PC-3 (cell line): ENCODE measurements at regions of chr6 and their contacts with region 1.

Region 1: GRCh38 chr6:3281631-3282475 is 23.1 kb downstream of the PSMG4 start:
- DNase-seq: peak; percentile 97
- ATAC-seq: peak; percentile 97
- H3K4me3 ChIP-seq: peak overlapping the region; percentile 26; the same call in 1 of the 2 replicates
- H3K27ac ChIP-seq: peak overlapping the region; percentile 89
- H3K4me1 ChIP-seq: peaks cover 25% of the 10 kb centered on the region
- H3K27me3 ChIP-seq: no peaks in the 10 kb centered on the region
- CTCF ChIP-seq: no peak

Region 2: DNA sequence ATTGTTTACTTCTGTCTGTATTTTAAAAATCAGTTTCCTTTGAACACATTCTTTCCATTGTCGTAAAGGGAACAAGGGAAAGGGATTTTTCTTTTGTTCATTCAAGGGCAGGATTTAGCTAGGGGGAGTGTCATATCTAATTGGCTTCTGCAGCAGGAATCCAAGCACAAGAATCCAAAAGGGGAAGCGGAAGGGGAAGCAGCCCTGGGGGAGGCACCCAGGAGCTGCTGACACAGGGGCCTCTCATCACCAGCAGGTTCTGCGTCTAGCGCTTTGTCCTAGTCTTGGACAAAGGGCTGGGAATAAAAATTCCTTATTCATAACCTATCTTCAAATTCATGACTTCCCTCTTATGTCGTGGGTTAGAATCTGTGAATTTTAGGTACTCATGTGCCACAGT is 199.9 kb before region 1 on chr6:
- CTCF ChIA-PET with region 1: no interaction called
- POLR2A ChIA-PET with region 1: no interaction called
- intact Hi-C with region 1: no loop called
- DNase-seq: no peak
- ATAC-seq: no peak
- H3K4me3 ChIP-seq: no peak overlapping the region
- H3K27ac ChIP-seq: no peak overlapping the region
- H3K4me1 ChIP-seq: no peaks in the 10 kb centered on the region
- H3K27me3 ChIP-seq: no peaks in the 10 kb centered on the region
- CTCF ChIP-seq: no peak

Region 3: GRCh38 chr6:3427687-3428085 is 145.8 kb after region 1 on chr6:
- CTCF ChIA-PET with region 1: interaction called, 10 read pairs
- POLR2A ChIA-PET with region 1: no interaction called
- intact Hi-C with region 1: no loop called
- DNase-seq: peak; percentile 54
- ATAC-seq: peak; percentile 67
- H3K4me3 ChIP-seq: no peak overlapping the region
- H3K27ac ChIP-seq: no peak overlapping the region
- H3K4me1 ChIP-seq: peaks cover 22% of the 10 kb centered on the region
- H3K27me3 ChIP-seq: no peaks in the 10 kb centered on the region
- CTCF ChIP-seq: no peak

Region 4: GRCh38 chr6:3732345-3733141 is 450.7 kb after region 1 on chr6:
- CTCF ChIA-PET with region 1: no interaction called
- POLR2A ChIA-PET with region 1: no interaction called
- intact Hi-C with region 1: loop called (anchors 1 kb)
- DNase-seq: peak; percentile 86
- ATAC-seq: peak; percentile 96
- H3K4me3 ChIP-seq: peak overlapping the region; percentile 20; the same call in 1 of the 2 replicates
- H3K27ac ChIP-seq: peak overlapping the region; percentile 30
- H3K4me1 ChIP-seq: peaks cover 12% of the 10 kb centered on the region
- H3K27me3 ChIP-seq: no peaks in the 10 kb centered on the region
- CTCF ChIP-seq: peak; percentile 96